Activated T-helper 2 cell treated with anti-CD3 and anti-CD28 coated beads, Interferon-gamma antibody, Interleukin-2, Interleukin-4, amounts not matched to agents 10 μg/mL and 5 μg/mL and 100 μg/mL, durations not matched to agents 14 hours and 24 hours and 36 hours (primary cell): ENCODE measurements at regions of chr5 and their contacts with region 1.

Region 1: DNA sequence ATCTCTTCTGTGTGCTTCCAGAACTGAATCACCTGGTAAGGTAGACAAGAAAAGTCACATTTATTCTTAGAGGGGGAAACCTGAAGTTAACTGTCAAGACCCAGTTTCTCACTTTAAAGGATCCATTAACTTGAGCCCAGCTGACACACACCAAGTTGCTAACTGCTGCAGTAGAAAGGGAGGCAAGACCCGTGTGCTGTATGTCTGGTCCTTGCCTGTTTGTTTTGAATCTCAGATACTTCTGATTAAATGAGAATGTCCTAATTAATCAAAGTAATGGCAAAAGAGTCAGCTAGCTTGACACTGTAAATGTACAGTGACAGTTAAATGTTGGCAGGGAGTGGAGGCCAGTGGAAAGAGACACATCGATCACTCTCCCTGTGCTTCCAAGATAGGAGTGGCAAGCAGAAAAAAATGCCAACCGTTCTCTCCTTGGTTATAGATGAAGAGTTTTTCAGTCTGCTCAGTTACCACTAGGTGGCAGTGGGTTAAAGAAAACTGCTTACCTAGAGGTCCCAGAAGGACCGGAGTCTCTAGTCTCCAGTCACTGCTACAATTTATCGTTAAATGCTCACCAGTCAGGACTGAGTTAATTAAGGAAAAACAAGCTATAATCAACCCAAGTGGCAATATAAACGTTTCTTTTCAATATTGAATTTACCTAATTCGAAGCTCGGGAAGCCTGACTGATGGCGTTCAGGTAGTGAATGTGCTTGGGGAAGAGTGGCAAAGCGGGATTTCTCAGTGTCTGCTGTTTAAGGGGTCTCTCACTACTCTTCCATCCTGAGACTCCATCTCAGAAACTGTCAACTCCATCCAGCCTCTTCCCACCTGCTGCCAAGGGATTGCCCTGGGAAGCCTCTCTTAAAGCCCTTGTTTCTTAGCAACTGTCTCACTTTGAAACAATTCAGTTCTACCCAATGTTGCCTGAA is 18.4 kb downstream of the LSM11 start:
- DNase-seq: no peak
- H3K4me3 Mint-ChIP-seq: no peak overlapping the region
- H3K27ac Mint-ChIP-seq: no peak overlapping the region
- H3K4me1 Mint-ChIP-seq: peaks cover 14% of the 10 kb centered on the region
- H3K27me3 Mint-ChIP-seq: no peaks in the 10 kb centered on the region

Region 2: GRCh38 chr5:157917899-157918809 is 156.2 kb after region 1 on chr5:
- intact Hi-C with region 1: loop called (anchors 2 kb)
- DNase-seq: peak; percentile 42
- H3K4me3 Mint-ChIP-seq: no peak overlapping the region
- H3K27ac Mint-ChIP-seq: peak overlapping the region; percentile 84
- H3K4me1 Mint-ChIP-seq: peaks cover 32% of the 10 kb centered on the region
- H3K27me3 Mint-ChIP-seq: no peaks in the 10 kb centered on the region

Region 3: GRCh38 chr5:157948738-157949410 is 186.9 kb after region 1 on chr5:
- intact Hi-C with region 1: loop called (anchors 5 kb)
- DNase-seq: peak; percentile 68
- H3K4me3 Mint-ChIP-seq: no peak overlapping the region
- H3K27ac Mint-ChIP-seq: no peak overlapping the region
- H3K4me1 Mint-ChIP-seq: peaks cover 3% of the 10 kb centered on the region
- H3K27me3 Mint-ChIP-seq: peaks cover 15% of the 10 kb centered on the region

Region 4: DNA sequence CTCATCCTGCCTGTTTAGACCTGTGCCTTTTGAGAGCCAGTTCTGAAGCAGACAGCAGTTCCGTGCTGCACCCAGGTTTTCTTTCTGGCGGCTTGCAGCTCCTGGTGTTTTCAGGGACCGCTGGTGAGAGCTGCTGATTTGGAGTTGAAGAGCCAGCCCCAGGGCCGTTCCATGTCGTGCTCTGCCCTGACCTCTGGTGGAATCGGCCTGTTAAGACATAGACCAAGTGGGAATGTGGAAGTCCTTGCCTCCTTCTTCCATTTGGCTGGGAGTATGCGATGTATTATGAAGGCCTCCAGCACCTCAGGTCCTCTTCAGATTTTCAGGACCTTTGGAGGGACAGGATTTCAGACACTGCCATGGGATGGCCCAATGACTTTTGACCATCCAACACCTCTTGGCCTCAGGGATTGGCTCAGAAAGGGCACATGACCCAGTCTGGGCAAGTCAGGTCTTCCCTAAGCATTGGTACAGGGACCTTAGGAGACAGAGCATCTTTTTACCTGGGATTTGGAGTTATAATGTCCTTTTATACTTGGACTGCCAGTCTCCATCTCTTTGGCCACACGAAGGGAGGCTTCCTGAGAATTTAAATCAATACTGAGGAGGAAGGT is 233.1 kb after region 1 on chr5:
- intact Hi-C with region 1: loop called (anchors 2 kb)
- DNase-seq: peak; percentile 21
- H3K4me3 Mint-ChIP-seq: no peak overlapping the region
- H3K27ac Mint-ChIP-seq: no peak overlapping the region
- H3K4me1 Mint-ChIP-seq: peaks cover 14% of the 10 kb centered on the region
- H3K27me3 Mint-ChIP-seq: peaks cover 34% of the 10 kb centered on the region